ENCODE measurements at regions of chr6 and their contacts with region 1.

Region 1: GRCh38 chr6:131063028-131063763 is at the start of gene EPB41L2:
- DNase-seq: peak; percentile 95
- ATAC-seq: peak; percentile 90
- H3K4me3 Mint-ChIP-seq: peak within 1 kb of the TSS; percentile 89
- H3K27ac Mint-ChIP-seq: peak within 1 kb of the TSS; percentile 71
- H3K4me1 Mint-ChIP-seq: peaks cover 37% of the 10 kb centered on the region
- H3K27me3 Mint-ChIP-seq: no peaks in the 10 kb centered on the region
- CTCF ChIP-seq: no peak
- total RNA-seq, gene EPB41L2: 62.7 and 62.8 TPM in 2 replicates

Region 2: GRCh38 chr6:129490521-129491245 is 1572.5 kb before region 1 on chr6:
- CTCF ChIA-PET with region 1: no interaction called
- POLR2A ChIA-PET with region 1: no interaction called
- intact Hi-C with region 1: loop called (anchors 2 kb)
- DNase-seq: no peak
- ATAC-seq: peak; percentile 88
- H3K4me3 Mint-ChIP-seq: peak overlapping the region; percentile 82
- H3K27ac Mint-ChIP-seq: peak overlapping the region; percentile 97
- H3K4me1 Mint-ChIP-seq: peaks cover 28% of the 10 kb centered on the region
- H3K27me3 Mint-ChIP-seq: no peaks in the 10 kb centered on the region
- CTCF ChIP-seq: no peak

Region 3: DNA sequence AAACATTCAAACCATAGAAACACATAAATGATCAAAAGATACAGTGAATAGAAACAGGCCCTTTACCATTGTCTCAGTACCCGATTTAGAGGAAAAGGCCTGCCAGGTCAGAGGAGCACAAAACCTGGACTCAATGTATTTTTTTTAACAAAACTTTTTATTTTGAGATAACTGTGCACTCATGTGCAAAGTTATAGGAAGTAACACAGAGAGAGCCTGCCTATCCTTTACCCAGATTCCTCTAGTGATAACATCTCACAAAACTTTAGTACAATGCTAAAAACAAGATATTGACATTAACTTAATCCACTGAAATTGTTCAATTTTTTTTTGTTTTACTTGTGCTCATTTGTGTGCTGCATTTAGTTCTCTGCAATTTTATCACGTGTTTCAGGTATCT is 803.6 kb before region 1 on chr6:
- CTCF ChIA-PET with region 1: no interaction called
- POLR2A ChIA-PET with region 1: no interaction called
- intact Hi-C with region 1: loop called (anchors 5 kb)
- DNase-seq: no peak
- ATAC-seq: peak; percentile 64
- H3K4me3 Mint-ChIP-seq: peak overlapping the region; percentile 85
- H3K27ac Mint-ChIP-seq: peak overlapping the region; percentile 95
- H3K4me1 Mint-ChIP-seq: peaks cover 37% of the 10 kb centered on the region
- H3K27me3 Mint-ChIP-seq: no peaks in the 10 kb centered on the region
- CTCF ChIP-seq: no peak

Region 4: DNA sequence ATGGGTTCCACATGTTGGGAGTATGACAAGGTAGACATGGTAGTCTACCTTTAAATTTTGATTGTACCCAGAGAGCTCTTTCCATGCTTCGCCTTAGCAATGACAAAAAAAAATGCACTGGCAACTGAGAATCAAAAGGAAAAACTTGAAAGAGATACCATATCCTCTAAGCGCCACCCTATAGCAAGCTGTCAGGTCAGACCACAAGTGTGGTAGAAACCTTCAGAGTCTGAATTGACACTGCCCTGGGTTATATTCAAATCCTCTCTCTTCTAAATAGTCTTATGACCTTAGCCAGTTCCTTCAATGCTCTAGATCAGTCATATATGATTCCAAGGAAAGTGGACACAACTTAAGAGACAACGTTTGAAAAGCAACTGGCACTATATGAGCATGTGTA is 281.6 kb before region 1 on chr6:
- CTCF ChIA-PET with region 1: no interaction called
- POLR2A ChIA-PET with region 1: no interaction called
- intact Hi-C with region 1: no loop called
- DNase-seq: no peak
- ATAC-seq: no peak
- H3K4me3 Mint-ChIP-seq: no peak overlapping the region
- H3K27ac Mint-ChIP-seq: no peak overlapping the region
- H3K4me1 Mint-ChIP-seq: no peaks in the 10 kb centered on the region
- H3K27me3 Mint-ChIP-seq: peaks cover 2% of the 10 kb centered on the region
- CTCF ChIP-seq: no peak

Region 5: DNA sequence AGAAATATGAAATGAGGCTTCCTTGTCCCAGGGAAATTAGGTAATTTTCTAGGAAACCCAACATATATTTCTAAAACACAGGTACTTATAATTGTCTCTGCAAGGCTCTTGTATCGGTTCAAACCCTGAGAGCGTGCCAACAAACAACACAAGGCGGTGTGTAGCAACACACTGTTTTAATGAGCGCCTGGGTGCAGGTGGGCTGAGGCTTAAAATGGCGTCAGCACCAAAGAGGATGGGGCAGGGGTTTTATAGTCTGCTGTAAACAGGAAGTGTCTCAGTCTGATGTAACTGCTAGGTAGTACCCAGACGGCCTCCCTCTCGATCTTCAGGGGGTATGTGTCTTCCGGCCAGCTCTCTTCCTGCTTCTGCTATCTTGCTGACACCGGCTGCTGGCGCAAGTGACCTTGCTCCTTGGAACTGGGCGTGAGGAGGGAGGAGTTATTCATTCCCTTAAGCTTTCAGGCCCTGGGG is 69.9 kb before region 1 on chr6:
- CTCF ChIA-PET with region 1: no interaction called
- POLR2A ChIA-PET with region 1: no interaction called
- intact Hi-C with region 1: no loop called
- DNase-seq: no peak
- ATAC-seq: no peak
- H3K4me3 Mint-ChIP-seq: no peak overlapping the region
- H3K27ac Mint-ChIP-seq: no peak overlapping the region
- H3K4me1 Mint-ChIP-seq: no peaks in the 10 kb centered on the region
- H3K27me3 Mint-ChIP-seq: no peaks in the 10 kb centered on the region
- CTCF ChIP-seq: no peak

Region 6: DNA sequence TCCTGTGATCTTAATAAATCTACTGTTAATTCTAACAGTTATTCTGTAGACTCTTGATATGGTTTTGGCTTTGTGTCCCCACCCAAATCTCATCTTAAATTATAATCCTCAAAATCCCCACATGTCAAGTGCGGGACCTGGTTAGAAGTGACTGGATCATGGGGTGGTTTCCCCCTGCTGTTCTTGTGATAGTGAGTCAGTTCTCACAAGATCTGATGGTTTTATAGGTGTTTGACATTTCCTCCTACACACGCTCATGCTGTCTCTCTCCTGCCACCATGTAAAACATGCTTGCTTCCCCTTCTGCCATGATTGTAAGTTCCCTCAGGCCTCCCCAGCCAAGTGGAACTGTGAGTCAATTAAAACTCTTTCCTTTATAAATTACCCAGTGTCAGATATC is 10.4 kb after region 1 on chr6:
- CTCF ChIA-PET with region 1: no interaction called
- POLR2A ChIA-PET with region 1: no interaction called
- intact Hi-C with region 1: loop called (anchors 2 kb)
- DNase-seq: no peak
- ATAC-seq: no peak
- H3K4me3 Mint-ChIP-seq: no peak overlapping the region
- H3K27ac Mint-ChIP-seq: no peak overlapping the region
- H3K4me1 Mint-ChIP-seq: no peaks in the 10 kb centered on the region
- H3K27me3 Mint-ChIP-seq: no peaks in the 10 kb centered on the region
- CTCF ChIP-seq: no peak

Region 7: GRCh38 chr6:131116749-131117360 is 53.7 kb after region 1 on chr6:
- CTCF ChIA-PET with region 1: interaction called, 5 read pairs
- POLR2A ChIA-PET with region 1: no interaction called
- intact Hi-C with region 1: loop called (anchors 2 kb)
- DNase-seq: no peak
- ATAC-seq: peak; percentile 34
- H3K4me3 Mint-ChIP-seq: no peak overlapping the region
- H3K27ac Mint-ChIP-seq: no peak overlapping the region
- H3K4me1 Mint-ChIP-seq: peaks cover 14% of the 10 kb centered on the region
- H3K27me3 Mint-ChIP-seq: no peaks in the 10 kb centered on the region
- CTCF ChIP-seq: peak; percentile 33

Region 8: GRCh38 chr6:131627724-131628682 is 564.8 kb after region 1 on chr6 and contains the start of gene MED23:
- CTCF ChIA-PET with region 1: no interaction called
- POLR2A ChIA-PET with region 1: interaction called, 3 read pairs
- intact Hi-C with region 1: loop called (anchors 5 kb)
- DNase-seq: peak; percentile 98
- ATAC-seq: peak; percentile 95
- H3K4me3 Mint-ChIP-seq: peak within 1 kb of the TSS; percentile 99
- H3K27ac Mint-ChIP-seq: peak within 1 kb of the TSS; percentile 94
- H3K4me1 Mint-ChIP-seq: peaks cover 31% of the 10 kb centered on the region
- H3K27me3 Mint-ChIP-seq: no peaks in the 10 kb centered on the region
- CTCF ChIP-seq: peak; percentile 62
- total RNA-seq, gene MED23: 45.3 and 51.0 TPM in 2 replicates

Region 9: DNA sequence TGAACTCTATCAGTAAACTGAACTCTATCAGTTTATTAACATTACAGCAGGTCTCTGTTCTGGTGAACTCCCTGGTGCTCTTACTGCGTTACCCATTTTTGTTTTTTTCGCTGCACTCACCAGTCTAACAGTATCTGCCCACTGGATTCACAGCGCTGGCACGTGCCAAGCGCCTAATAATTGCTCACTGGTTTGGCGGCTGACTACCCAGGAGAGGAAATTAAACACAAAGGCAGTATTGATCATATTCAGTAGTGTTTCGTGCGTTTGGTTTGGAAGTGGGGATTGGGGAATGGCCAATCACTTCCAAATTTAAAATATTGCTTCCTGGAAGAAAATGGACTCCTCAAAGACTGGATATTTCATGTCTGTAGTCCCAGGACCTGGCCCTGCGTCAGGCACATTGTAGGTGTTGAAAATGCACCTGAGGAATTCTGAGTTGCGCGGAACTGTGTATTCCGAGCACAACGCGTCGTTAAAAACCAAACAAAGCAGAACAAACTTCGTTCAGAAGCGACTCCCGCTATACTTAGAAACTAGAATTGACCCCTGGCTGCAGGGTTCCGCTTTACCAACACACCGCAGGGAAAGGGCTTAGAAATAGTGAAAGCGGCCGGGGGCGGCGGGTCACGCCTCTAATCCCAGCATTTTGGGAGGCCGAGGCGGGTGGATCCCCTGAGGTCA is 1750.1 kb after region 1 on chr6:
- CTCF ChIA-PET with region 1: no interaction called
- POLR2A ChIA-PET with region 1: no interaction called
- intact Hi-C with region 1: loop called (anchors 5 kb)
- DNase-seq: peak; percentile 33
- ATAC-seq: peak; percentile 17
- H3K4me3 Mint-ChIP-seq: peak overlapping the region; percentile 98
- H3K27ac Mint-ChIP-seq: peak overlapping the region; percentile 99
- H3K4me1 Mint-ChIP-seq: peaks cover 47% of the 10 kb centered on the region
- H3K27me3 Mint-ChIP-seq: no peaks in the 10 kb centered on the region
- CTCF ChIP-seq: no peak